Thyroid gland (tissue), 4 donors: ENCODE measurements at regions of chr2 and their contacts with region 1.

Region 1: DNA sequence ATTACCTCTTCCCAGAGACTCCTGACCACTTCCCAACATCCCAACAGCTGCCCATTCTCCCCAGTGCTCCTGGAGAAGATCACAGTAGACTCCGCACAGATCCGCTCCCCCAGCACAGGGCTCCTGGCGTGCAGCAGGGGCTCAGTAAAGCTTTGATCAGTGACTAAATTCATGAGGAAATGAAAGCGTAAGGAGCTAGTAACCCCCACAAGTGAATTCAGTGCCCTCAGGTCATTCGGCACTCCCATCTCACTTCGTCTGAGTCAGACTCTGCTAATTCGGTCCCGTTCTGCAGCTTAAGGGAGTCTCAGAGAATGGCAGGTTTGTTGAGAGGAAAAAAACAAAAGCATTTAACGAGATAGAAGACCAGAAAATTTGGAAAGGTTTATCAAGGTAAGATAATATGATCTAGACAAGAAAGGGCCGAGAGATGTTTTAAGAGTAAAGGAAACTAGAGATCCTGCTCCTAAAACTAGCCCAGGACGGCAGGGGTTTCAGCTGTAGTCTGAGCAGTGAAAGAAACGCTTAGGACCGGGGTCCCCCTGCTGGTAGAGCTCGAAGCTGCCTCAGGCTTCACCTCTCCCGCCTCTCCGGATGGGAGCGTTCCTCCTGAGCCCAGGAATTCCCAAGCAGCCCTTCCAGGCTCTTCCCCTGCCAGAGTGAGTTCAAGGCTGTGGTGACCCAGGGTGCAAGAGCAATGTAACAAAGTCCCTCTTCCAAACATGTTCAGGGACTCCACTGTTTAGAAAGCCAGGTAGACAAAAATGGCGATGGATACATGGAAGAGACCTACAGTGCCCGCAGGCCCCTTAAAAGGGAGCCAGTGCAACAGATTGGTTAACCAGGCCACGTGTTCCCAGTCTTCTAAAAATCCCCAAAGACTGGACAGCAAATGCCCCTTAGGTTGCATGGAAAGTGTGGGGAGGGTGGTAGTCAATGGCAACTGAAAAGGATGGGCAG is 127.3 kb downstream of the DNER start:
- DNase-seq: peak; percentile 73 to 78
- H3K4me3 ChIP-seq: no peak overlapping the region
- H3K27ac ChIP-seq: no peak overlapping the region
- H3K4me1 ChIP-seq: no peaks in the 10 kb centered on the region
- H3K27me3 ChIP-seq: no peaks in the 10 kb centered on the region
- CTCF ChIP-seq: peak; percentile 63 to 86 (median 78)
- POLR2A ChIP-seq: no peak

Region 2: GRCh38 chr2:228974169-228974568 is 612.9 kb before region 1 on chr2:
- intact Hi-C with region 1: no loop called
- DNase-seq: no peak
- H3K4me3 ChIP-seq: no peak overlapping the region
- H3K27ac ChIP-seq: no peak overlapping the region
- H3K4me1 ChIP-seq: no peaks in the 10 kb centered on the region
- H3K27me3 ChIP-seq: no peaks in the 10 kb centered on the region
- CTCF ChIP-seq: no peak
- POLR2A ChIP-seq: no peak

Region 3: GRCh38 chr2:229339618-229340017 is 247.4 kb before region 1 on chr2:
- intact Hi-C with region 1: loop called (anchors 5 kb)
- DNase-seq: no peak
- H3K4me3 ChIP-seq: no peak overlapping the region
- H3K27ac ChIP-seq: no peak overlapping the region
- H3K4me1 ChIP-seq: no peaks in the 10 kb centered on the region
- H3K27me3 ChIP-seq: no peaks in the 10 kb centered on the region
- CTCF ChIP-seq: no peak
- POLR2A ChIP-seq: no peak

Region 4: DNA sequence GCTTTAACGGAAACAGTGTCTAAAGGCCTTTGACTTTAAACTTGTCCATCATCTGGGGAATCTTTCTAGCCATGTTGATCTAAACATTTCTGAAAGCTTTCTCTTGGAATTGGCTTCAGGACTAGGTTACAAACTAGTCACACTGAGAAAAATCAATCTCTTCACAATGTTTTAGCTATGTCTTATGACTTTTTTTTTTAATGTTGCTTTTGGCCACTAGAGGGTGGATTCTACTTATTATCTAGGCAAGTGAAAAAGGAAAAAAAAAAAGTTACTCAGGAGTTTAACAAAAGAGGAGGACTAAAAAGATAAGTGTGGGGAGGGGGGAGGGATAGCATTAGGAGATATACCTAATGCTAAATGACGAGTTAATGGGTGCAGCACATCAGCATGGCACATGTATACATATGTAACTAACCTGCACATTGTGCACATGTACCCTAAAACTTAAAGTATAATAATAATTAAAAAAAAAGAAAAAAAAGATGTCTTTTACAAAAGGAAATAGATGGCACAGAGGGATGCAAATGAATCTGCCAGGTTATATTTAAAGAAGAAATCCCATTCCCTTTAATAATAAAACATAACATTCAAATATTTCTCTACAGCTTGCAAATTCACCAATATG is 155.6 kb before region 1 on chr2:
- intact Hi-C with region 1: loop called (anchors 5 kb)
- DNase-seq: no peak
- H3K4me3 ChIP-seq: no peak overlapping the region
- H3K27ac ChIP-seq: no peak overlapping the region
- H3K4me1 ChIP-seq: no peaks in the 10 kb centered on the region
- H3K27me3 ChIP-seq: no peaks in the 10 kb centered on the region
- CTCF ChIP-seq: peak; percentile 9 to 60 (median 39)
- POLR2A ChIP-seq: no peak

Region 5: DNA sequence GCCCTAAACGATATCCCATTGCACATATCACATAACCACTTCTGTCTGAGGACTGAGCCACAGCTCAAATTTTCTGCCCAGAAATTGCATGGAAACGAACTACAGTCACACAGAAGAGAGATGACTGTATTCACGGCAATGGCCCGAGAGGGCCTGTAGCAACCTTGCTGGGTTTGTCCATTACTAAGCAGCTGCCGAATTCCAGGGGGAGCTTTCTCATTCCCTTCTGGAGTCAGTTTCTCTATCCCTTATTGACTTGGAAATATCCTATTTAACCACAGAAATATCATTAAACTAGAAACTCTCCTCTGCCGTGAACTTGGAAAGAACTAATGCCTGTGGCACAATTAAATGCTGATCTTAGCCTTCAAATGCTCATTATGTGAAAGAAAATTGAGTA is 56.6 kb before region 1 on chr2:
- intact Hi-C with region 1: no loop called
- DNase-seq: no peak
- H3K4me3 ChIP-seq: no peak overlapping the region
- H3K27ac ChIP-seq: no peak overlapping the region
- H3K4me1 ChIP-seq: no peaks in the 10 kb centered on the region
- H3K27me3 ChIP-seq: no peaks in the 10 kb centered on the region
- CTCF ChIP-seq: no peak
- POLR2A ChIP-seq: no peak

Region 6: DNA sequence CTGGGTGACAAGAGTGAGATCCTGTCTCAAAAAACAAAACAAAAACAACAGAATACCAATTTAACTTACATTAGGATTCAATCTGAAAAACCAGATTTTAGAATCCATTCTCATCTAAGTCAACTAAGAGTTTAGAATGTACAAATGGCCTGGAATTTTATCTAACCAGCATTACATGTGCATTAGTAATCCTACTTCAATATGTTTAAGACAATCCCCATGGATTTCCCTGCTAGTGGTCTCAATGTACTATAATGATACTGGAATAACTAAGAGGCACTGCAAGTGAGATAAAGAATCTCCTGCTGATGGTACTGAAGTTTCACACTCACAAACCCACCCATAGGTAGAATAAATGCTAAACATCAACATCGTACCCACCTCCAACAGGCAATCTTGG is 181.2 kb after region 1 on chr2:
- intact Hi-C with region 1: no loop called
- DNase-seq: no peak
- H3K4me3 ChIP-seq: no peak overlapping the region
- H3K27ac ChIP-seq: no peak overlapping the region
- H3K4me1 ChIP-seq: no peaks in the 10 kb centered on the region
- H3K27me3 ChIP-seq: no peaks in the 10 kb centered on the region
- CTCF ChIP-seq: no peak
- POLR2A ChIP-seq: no peak